ENCODE measurements at regions of chr6 and their contacts with region 1.

Region 1: DNA sequence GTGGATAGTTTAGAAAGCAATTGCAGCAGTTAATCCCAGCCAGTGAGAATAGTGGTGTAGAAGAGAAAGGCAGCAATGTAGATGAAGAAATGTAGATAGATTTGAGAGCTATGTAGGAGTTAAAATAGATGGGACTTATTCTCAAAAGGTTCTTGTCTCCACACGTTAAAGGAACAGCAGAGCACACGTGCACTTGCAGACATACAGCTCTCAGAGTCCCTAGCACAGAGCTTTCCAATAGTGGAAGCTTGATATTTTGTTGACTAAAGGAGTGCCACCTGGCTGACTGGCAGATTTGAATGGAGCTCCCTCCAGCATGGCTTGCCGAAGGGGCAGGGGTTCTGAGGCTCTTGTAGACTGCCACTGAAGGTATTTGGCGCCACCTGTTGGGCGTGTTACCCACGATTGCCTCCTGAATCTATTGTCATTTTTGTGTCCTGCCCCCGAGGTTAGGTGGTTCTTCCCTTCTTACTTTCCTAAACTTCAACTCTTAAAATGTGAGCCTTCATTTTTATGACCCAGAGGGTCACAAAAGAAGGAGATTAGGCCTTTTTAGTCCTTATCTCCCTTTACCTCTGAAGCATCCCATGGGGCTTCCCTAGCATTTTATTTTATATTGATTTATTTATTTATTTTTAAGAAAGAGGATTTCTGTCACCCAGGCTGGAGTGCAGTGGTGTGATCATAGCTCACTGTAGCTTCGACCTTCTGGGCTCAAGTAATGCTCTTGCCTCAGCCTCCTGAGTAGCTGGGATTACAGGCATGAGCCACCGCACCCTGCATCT is 16.4 kb downstream of the BRD2 start:
- DNase-seq: peak; percentile 93
- H3K4me3 Mint-ChIP-seq: no peak overlapping the region
- H3K27ac Mint-ChIP-seq: no peak overlapping the region
- H3K4me1 Mint-ChIP-seq: peaks cover 19% of the 10 kb centered on the region
- H3K27me3 Mint-ChIP-seq: no peaks in the 10 kb centered on the region

Region 2: DNA sequence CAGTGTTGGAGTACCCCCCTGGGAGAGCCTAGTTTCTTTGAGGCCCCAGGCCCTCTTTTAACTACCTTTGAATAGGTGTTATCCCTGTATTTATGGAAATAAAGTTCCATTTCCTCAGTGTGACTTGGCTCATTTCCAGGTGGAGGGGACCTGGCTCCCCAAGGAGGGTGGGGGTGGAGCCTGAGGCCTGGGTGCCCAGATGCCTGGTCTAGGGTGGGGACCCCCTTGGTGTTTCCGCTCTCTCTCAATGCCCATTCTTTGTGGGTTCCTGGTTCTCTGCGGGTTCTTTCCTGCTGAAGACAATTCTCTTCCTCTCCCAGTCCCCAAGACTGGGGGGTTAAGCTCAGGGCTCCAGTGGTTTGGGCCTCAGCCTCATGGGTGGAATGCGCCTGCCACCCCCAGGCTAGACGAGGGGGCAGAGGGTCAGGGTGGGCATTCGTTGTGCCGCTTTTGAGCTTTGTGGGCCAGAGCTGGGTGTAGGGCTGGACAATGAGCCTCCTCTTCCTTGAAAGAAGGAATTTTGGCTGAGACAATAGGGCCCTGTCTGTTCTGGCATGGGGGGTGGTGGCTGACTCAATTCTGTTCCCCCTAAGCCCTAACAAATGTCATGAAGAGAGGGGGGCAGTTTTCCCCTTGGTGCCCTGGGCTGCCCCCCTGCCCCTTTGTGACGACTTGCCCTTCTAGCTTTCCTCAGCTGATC is 821.1 kb before region 1 on chr6:
- CTCF ChIA-PET with region 1: no interaction called
- POLR2A ChIA-PET with region 1: no interaction called
- intact Hi-C with region 1: no loop called
- DNase-seq: no peak
- H3K4me3 Mint-ChIP-seq: no peak overlapping the region
- H3K27ac Mint-ChIP-seq: no peak overlapping the region
- H3K4me1 Mint-ChIP-seq: no peaks in the 10 kb centered on the region
- H3K27me3 Mint-ChIP-seq: no peaks in the 10 kb centered on the region

Region 3: GRCh38 chr6:32413427-32414047 is 571.3 kb before region 1 on chr6:
- CTCF ChIA-PET with region 1: no interaction called
- POLR2A ChIA-PET with region 1: no interaction called
- intact Hi-C with region 1: no loop called
- DNase-seq: peak; percentile 91
- H3K4me3 Mint-ChIP-seq: no peak overlapping the region
- H3K27ac Mint-ChIP-seq: no peak overlapping the region
- H3K4me1 Mint-ChIP-seq: peaks cover 10% of the 10 kb centered on the region
- H3K27me3 Mint-ChIP-seq: peaks cover 42% of the 10 kb centered on the region

Region 4: GRCh38 chr6:32501016-32501415 is 483.8 kb before region 1 on chr6:
- CTCF ChIA-PET with region 1: no interaction called
- POLR2A ChIA-PET with region 1: no interaction called
- intact Hi-C with region 1: no loop called
- DNase-seq: no peak
- H3K4me3 Mint-ChIP-seq: no peak overlapping the region
- H3K27ac Mint-ChIP-seq: no peak overlapping the region
- H3K4me1 Mint-ChIP-seq: no peaks in the 10 kb centered on the region
- H3K27me3 Mint-ChIP-seq: peaks cover 3% of the 10 kb centered on the region

Region 5: GRCh38 chr6:32838114-32838958 is 146.5 kb before region 1 on chr6 and contains the start of gene TAP2:
- CTCF ChIA-PET with region 1: interaction called, 51 read pairs
- POLR2A ChIA-PET with region 1: interaction called, 3 read pairs
- intact Hi-C with region 1: no loop called
- DNase-seq: peak; percentile 98
- H3K4me3 Mint-ChIP-seq: peak within 1 kb of the TSS; percentile 73
- H3K27ac Mint-ChIP-seq: peak within 1 kb of the TSS; percentile 91
- H3K4me1 Mint-ChIP-seq: peaks cover 76% of the 10 kb centered on the region
- H3K27me3 Mint-ChIP-seq: no peaks in the 10 kb centered on the region
- total RNA-seq, gene TAP2: 134 to 143 TPM

Region 6: DNA sequence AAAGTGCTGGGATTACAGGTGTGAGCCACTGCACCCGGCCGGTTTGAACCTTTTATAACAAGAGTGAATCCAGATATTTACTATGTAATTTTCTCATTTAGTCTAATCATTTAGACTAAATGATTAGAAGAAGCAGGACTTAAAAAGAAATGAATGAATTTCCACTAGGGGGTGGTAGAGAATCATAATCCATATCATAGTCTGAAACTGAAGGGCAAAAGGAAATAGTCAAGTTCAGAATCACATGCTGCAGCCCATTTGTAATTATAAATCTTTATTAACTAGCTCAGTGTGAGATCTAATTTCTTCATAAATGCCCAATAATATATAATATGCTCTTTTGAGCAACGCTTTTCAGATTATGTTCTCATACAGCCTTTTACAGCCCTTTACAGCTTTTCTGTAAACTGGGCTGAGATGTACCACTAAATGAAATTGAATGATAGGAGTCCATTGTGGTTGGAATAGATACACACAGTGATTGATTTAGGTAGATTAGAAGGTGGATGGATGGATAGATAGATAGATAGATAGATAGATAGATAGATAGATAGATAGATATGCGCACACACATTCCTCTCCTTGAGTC is 99.0 kb before region 1 on chr6:
- CTCF ChIA-PET with region 1: interaction called, 108 read pairs
- POLR2A ChIA-PET with region 1: no interaction called
- intact Hi-C with region 1: loop called (anchors 1 kb)
- DNase-seq: no peak
- H3K4me3 Mint-ChIP-seq: no peak overlapping the region
- H3K27ac Mint-ChIP-seq: no peak overlapping the region
- H3K4me1 Mint-ChIP-seq: peaks cover 11% of the 10 kb centered on the region
- H3K27me3 Mint-ChIP-seq: no peaks in the 10 kb centered on the region

Region 7: DNA sequence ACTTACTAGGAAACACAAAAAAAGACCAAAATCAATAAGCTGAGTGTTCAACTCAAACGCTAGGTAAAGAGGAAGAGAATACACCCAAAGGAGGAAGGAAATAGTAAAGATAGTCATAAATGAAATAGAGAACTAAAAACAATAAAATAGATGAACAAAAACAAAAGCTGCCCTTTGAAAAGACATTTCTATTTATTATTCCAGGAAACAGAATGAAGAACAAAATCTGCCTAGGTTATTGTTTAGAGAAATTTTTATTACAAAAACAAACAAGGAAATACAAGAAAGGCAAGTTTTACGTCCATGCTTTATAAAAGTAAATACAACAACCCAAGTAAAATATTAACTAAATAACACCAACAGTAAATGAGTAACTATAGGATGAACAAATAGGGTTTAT is 64.1 kb before region 1 on chr6:
- CTCF ChIA-PET with region 1: interaction called, 22 read pairs
- POLR2A ChIA-PET with region 1: no interaction called
- intact Hi-C with region 1: no loop called
- DNase-seq: no peak
- H3K4me3 Mint-ChIP-seq: no peak overlapping the region
- H3K27ac Mint-ChIP-seq: no peak overlapping the region
- H3K4me1 Mint-ChIP-seq: peaks cover 4% of the 10 kb centered on the region
- H3K27me3 Mint-ChIP-seq: peaks cover 4% of the 10 kb centered on the region

Region 8: DNA sequence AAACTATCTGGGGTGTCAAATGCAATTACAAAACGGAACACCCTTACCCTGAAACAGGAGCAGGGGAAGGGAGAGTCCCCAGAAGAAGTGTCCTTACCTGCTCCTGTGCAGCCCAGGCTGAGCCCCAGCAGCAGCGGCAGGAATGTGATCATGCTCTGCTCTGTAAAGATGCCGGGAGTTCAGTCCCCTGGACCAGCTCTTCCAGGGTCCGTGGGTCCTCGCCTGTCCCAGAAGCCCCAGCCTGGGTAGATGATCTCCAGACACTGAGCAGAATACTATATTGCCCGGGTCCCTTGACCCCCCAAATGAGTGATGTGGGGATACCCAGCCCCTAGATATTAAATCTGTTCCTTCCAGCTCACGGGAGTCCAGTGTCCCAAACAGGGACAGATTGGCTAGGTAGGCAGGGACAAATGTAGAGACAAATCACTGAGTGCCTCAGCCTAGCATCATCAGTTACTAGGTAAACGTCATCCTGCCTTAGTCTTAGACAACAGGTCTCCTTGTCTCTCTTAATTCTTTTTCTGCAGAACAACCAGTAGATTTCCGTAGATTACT is 44.1 kb before region 1 on chr6 and contains the start of gene HLA-DMB:
- CTCF ChIA-PET with region 1: interaction called, 384 read pairs
- POLR2A ChIA-PET with region 1: interaction called, 3 read pairs
- intact Hi-C with region 1: loop called (anchors 2 kb)
- DNase-seq: peak; percentile 52
- H3K4me3 Mint-ChIP-seq: peak within 1 kb of the TSS; percentile 77
- H3K27ac Mint-ChIP-seq: peak within 1 kb of the TSS; percentile 87
- H3K4me1 Mint-ChIP-seq: peaks cover 59% of the 10 kb centered on the region
- H3K27me3 Mint-ChIP-seq: no peaks in the 10 kb centered on the region
- total RNA-seq, gene HLA-DMB: 1.6 to 1.9 TPM

Region 9: DNA sequence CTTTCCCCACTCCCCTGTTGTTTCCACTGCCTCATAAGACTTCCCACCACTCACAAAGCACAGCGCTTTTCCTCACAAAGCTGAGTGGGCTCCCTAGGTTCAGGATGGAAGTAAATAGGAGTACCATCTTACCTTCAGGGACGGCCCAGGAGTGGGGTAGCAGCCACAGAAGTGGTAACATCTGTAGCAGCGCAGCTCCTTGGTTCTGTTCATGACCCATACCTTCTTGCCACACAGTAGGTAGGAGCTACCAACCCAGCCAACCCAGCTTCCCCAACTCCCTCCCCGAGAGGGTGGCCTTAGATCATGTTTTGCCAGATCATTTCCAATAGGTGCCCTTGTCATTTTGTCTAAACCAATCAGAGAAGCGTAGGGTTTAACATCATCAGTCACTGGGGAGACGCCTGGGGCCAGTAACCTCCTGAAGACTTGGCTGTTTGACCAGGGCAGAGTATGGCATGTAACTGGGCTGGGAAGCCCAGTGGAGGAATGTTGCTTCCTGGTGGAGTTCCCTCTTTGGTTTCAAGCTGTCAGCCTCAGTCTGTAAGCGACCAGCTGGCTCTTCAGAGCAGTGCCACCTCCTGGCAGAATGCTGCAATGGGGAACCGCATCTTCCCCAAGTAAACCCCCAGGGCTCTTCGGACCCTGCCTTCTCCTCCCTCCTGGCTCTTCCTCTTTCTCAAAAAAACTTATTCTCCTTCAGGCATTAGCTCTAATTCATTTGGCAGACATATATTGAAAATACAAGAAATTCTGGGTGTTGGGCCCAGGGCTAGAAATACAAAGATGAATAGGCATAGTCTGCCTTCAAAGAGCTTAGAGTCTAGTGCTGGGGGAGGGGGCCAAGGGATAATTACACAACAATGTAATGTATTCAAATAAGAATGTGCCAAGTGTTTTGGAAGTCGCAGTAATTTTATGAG is 31.7 kb before region 1 on chr6 and contains the start of gene HLA-DMA:
- CTCF ChIA-PET with region 1: interaction called, 104 read pairs
- POLR2A ChIA-PET with region 1: interaction called, 4 read pairs
- intact Hi-C with region 1: loop called (anchors 2 kb)
- DNase-seq: peak; percentile 83
- H3K4me3 Mint-ChIP-seq: peak within 1 kb of the TSS; percentile 64
- H3K27ac Mint-ChIP-seq: peak within 1 kb of the TSS; percentile 39
- H3K4me1 Mint-ChIP-seq: peaks cover 51% of the 10 kb centered on the region
- H3K27me3 Mint-ChIP-seq: no peaks in the 10 kb centered on the region
- total RNA-seq, gene HLA-DMA: 9.6 to 10.2 TPM